ENCODE measurements at regions of chr11 and their contacts with region 1.

Region 1: GRCh38 chr11:6682936-6683861 is at the start of gene MRPL17:
- DNase-seq: peak; percentile 100
- H3K4me3 Mint-ChIP-seq: peak within 1 kb of the TSS; percentile 99
- H3K27ac Mint-ChIP-seq: peak within 1 kb of the TSS; percentile 99
- H3K4me1 Mint-ChIP-seq: peaks cover 42% of the 10 kb centered on the region
- H3K27me3 Mint-ChIP-seq: no peaks in the 10 kb centered on the region
- total RNA-seq, gene MRPL17: 121 and 132 TPM in 2 replicates

Region 2: GRCh38 chr11:6389921-6390724 is 293.1 kb before region 1 on chr11 and contains the start of gene SMPD1:
- intact Hi-C with region 1: loop called (anchors 1 kb)
- DNase-seq: peak; percentile 89
- H3K4me3 Mint-ChIP-seq: peak within 1 kb of the TSS; percentile 86
- H3K27ac Mint-ChIP-seq: peak within 1 kb of the TSS; percentile 98
- H3K4me1 Mint-ChIP-seq: peaks cover 20% of the 10 kb centered on the region
- H3K27me3 Mint-ChIP-seq: peaks cover 7% of the 10 kb centered on the region
- total RNA-seq, gene SMPD1: 8.5 and 9.4 TPM in 2 replicates

Region 3: GRCh38 chr11:6481012-6481923 is 201.9 kb before region 1 on chr11 and contains the starts of genes ARFIP2 and TIMM10B:
- intact Hi-C with region 1: loop called (anchors 1 kb)
- DNase-seq: peak; percentile 97
- H3K4me3 Mint-ChIP-seq: peak within 1 kb of the TSS; percentile 94
- H3K27ac Mint-ChIP-seq: peak within 1 kb of the TSS; percentile 94
- H3K4me1 Mint-ChIP-seq: peaks cover 40% of the 10 kb centered on the region
- H3K27me3 Mint-ChIP-seq: no peaks in the 10 kb centered on the region
- total RNA-seq, gene ARFIP2: 51.5 and 53.8 TPM in 2 replicates
- total RNA-seq, gene TIMM10B: 38.8 and 42.7 TPM in 2 replicates

Region 4: DNA sequence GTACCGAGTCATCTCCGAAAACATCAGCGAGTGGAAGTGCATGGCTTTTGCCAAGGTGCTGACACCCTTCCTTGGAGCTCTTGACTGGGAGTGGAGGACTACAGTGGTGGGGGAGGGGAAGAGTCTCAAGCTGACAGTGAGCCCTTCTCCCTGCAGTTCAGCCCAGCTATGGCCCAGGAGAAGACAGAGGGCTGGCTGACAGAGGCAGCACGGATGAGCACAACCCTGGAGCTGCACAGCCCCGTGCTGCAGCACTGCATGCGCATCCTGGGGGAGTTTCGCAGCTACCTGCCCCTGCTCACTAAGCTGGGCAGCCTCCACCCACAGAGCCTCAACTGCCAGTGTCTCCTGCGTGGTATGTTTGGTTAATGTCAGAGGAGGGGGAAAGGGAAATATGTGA is 144.7 kb before region 1 on chr11:
- intact Hi-C with region 1: no loop called
- DNase-seq: no peak
- H3K4me3 Mint-ChIP-seq: no peak overlapping the region
- H3K27ac Mint-ChIP-seq: no peak overlapping the region
- H3K4me1 Mint-ChIP-seq: peaks cover 26% of the 10 kb centered on the region
- H3K27me3 Mint-ChIP-seq: no peaks in the 10 kb centered on the region

Region 5: GRCh38 chr11:6603287-6604080 is 79.7 kb before region 1 on chr11 and contains the starts of genes ILK and RRP8:
- intact Hi-C with region 1: loop called (anchors 1 kb)
- DNase-seq: peak; percentile 84
- H3K4me3 Mint-ChIP-seq: no peak within 1 kb of the TSS
- H3K27ac Mint-ChIP-seq: no peak within 1 kb of the TSS
- H3K4me1 Mint-ChIP-seq: peaks cover 26% of the 10 kb centered on the region
- H3K27me3 Mint-ChIP-seq: no peaks in the 10 kb centered on the region
- total RNA-seq, gene ILK: 90.1 and 97.5 TPM in 2 replicates
- total RNA-seq, gene RRP8: 38.8 and 40.5 TPM in 2 replicates

Region 6: GRCh38 chr11:6667733-6668374 is 15.3 kb before region 1 on chr11:
- intact Hi-C with region 1: loop called (anchors 1 kb)
- DNase-seq: peak; percentile 55
- H3K4me3 Mint-ChIP-seq: peak overlapping the region; percentile 23
- H3K27ac Mint-ChIP-seq: peak overlapping the region; percentile 41
- H3K4me1 Mint-ChIP-seq: peaks cover 62% of the 10 kb centered on the region
- H3K27me3 Mint-ChIP-seq: peaks cover 12% of the 10 kb centered on the region

Region 7: GRCh38 chr11:8682303-8683114 is 1999.3 kb after region 1 on chr11 and contains the starts of genes RPL27A and TRIM66:
- intact Hi-C with region 1: loop called (anchors 5 kb)
- DNase-seq: peak; percentile 99
- H3K4me3 Mint-ChIP-seq: peak within 1 kb of the TSS; percentile 97
- H3K27ac Mint-ChIP-seq: peak within 1 kb of the TSS; percentile 95
- H3K4me1 Mint-ChIP-seq: peaks cover 42% of the 10 kb centered on the region
- H3K27me3 Mint-ChIP-seq: no peaks in the 10 kb centered on the region
- total RNA-seq, gene RPL27A: 679 and 691 TPM in 2 replicates
- total RNA-seq, gene TRIM66: 11.7 and 14.2 TPM in 2 replicates